Aorta (tissue), 5 donors: ENCODE measurements at regions of chr2 and their contacts with region 1.

Region 1: DNA sequence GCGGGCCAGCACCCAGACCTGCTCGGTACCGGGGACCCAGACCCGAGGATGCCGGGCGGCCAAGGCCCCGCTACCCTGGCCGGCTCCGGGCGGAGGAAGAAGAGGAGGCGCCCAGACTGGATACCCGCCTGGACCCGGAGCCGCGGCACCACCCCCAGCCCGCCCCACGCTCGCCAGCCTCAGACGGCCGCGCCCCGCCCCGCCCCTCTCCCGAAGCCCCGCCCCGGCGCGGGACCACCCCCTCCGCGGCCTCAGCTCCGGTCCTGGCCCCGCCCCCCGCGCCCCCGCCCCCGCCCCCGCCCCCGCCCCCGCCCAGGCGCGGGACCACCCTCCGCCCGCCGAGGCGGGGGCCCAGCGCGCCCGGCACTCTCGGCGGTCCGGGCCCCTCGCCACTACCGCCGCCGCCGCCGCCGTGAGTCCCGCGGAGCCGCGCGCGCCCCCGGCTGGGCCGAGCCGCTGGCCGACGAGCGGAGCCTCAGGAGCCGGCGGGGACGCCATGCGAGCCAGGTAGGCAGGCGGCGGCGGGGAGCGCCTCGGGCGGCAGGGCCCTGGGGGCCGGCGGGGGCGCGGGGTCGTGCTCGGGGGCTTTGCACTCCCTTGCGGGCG is at the start of gene SH3BP4:
- DNase-seq: peak; percentile 87 to 94
- ATAC-seq: peak; percentile 91
- H3K4me3 ChIP-seq: peak within 1 kb of the TSS; percentile 91 to 93
- H3K27ac ChIP-seq: peak within 1 kb of the TSS; percentile 59 to 64
- H3K4me1 ChIP-seq: no peaks in the 10 kb centered on the region
- H3K27me3 ChIP-seq: no peaks in the 10 kb centered on the region
- total RNA-seq, gene SH3BP4: 27.6 to 32.2 TPM

Region 2: DNA sequence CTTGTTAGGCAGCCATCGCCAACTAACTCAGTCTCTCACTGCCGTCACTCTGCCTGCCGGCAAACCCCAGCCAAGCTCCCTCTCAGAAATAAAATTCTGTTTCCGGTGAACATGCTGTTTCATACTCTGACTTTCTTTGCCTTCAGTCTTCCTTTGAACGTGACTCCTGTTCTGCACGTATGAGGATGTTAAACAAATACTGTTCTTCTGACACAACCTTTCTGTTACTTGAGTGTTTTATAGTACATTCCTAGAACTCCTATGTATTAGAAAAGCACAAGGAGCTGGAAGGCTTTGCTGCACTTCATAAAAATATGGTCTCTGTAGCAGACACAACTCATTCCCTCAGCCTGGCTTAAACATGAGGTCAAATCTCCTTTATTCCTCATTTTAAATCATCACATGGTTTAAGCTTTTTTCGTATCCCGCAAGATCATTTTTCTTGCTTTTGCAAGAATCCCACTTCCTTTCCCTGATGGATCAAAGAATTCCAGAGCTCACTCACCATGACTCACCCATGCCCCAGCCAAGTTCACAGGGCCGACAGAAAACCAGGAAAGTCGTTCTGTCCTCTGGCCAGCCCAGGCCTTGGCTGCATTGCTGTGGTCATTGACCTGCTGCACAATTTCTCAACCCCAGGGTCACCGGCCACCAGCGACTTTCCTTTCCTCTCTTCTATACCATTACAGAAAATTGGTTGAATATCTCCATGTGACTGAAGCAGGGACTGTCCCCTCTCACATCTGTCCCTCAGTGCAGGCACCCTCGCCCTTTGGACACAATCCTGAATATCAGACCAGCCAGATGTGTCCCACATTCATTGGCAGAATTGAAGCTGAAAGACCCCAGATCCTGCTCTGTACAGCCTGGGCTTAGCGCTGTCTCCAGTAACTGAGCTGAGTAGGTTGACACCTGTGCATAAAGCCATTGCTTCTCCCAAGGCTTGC is 271.8 kb before region 1 on chr2:
- intact Hi-C with region 1: loop called in 1 of 2 experiments (anchors 5 kb)
- DNase-seq: peak; percentile 88 to 89
- ATAC-seq: peak; percentile 91
- H3K4me3 ChIP-seq: peak overlapping the region in 1 of 2 donors; percentile 14
- H3K27ac ChIP-seq: peak overlapping the region in 1 of 2 donors; percentile 67
- H3K4me1 ChIP-seq: peaks cover 3 to 4% of the 10 kb centered on the region in 2 donors
- H3K27me3 ChIP-seq: no peaks in the 10 kb centered on the region

Region 3: GRCh38 chr2:234823877-234824376 is 127.8 kb before region 1 on chr2:
- intact Hi-C with region 1: loop called in 1 of 2 experiments (anchors 10 kb)
- DNase-seq: peak in 1 of 2 donors; percentile 74
- ATAC-seq: peak; percentile 88
- H3K4me3 ChIP-seq: no peak overlapping the region
- H3K27ac ChIP-seq: peak overlapping the region in 1 of 2 donors; percentile 47
- H3K4me1 ChIP-seq: no peaks in the 10 kb centered on the region
- H3K27me3 ChIP-seq: no peaks in the 10 kb centered on the region

Region 4: DNA sequence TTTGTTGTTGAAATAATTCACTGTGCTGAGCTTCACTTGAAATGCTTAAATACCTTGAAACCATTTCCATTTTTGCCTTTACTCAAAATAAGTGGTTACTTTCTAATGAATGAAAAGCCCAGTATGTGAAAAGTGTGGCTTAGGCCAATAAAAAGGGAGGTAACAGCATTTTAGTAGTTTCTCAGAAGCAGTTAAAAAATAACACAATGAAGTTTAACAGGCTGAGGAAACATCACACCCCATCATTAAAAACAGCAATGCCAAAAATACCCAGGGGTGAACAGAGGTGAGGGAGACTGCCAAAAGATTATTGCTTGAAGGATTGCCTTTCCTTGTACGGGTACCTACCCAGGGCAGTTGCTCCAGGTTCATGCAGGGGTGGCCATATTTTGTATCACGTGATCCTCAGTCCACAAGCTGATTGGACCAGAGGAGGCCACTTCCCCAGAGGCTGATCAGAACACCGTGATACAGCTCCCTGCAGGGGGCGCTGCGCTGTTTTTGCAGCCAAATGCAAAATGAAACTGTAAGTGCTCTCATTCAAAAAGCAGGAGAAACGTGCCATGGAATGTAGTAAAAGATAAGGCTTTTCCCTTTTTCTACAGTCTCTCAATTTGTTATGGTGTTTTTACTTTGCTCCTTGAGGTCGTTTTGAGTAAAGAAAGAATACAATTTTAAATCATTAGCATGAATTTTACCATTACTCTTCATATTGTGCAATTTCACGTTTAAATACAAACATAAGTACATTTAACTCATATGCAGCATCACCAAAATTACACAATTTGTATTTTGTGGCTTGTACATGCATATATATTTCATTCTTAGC is 70.1 kb before region 1 on chr2:
- intact Hi-C with region 1: loop called in 1 of 2 experiments (anchors 10 kb)
- DNase-seq: peak; percentile 89 to 94
- ATAC-seq: peak; percentile 94
- H3K4me3 ChIP-seq: peak overlapping the region in 1 of 2 donors; percentile 12
- H3K27ac ChIP-seq: peak overlapping the region in 1 of 2 donors; percentile 58
- H3K4me1 ChIP-seq: no peaks in the 10 kb centered on the region
- H3K27me3 ChIP-seq: no peaks in the 10 kb centered on the region

Region 5: GRCh38 chr2:234989183-234989701 is 37.5 kb after region 1 on chr2:
- intact Hi-C with region 1: loop called (anchors 5 kb)
- DNase-seq: peak; percentile 95 to 97
- ATAC-seq: peak; percentile 82
- H3K4me3 ChIP-seq: no peak overlapping the region
- H3K27ac ChIP-seq: peak overlapping the region in 1 of 2 donors; percentile 57
- H3K4me1 ChIP-seq: no peaks in the 10 kb centered on the region
- H3K27me3 ChIP-seq: no peaks in the 10 kb centered on the region

Region 6: GRCh38 chr2:234994438-234995321 is 42.9 kb after region 1 on chr2:
- intact Hi-C with region 1: loop called (anchors 5 kb)
- DNase-seq: peak in 1 of 2 donors; percentile 57
- ATAC-seq: no peak
- H3K4me3 ChIP-seq: no peak overlapping the region
- H3K27ac ChIP-seq: no peak overlapping the region
- H3K4me1 ChIP-seq: no peaks in the 10 kb centered on the region
- H3K27me3 ChIP-seq: no peaks in the 10 kb centered on the region

Region 7: GRCh38 chr2:235050992-235051351 is 99.2 kb after region 1 on chr2:
- intact Hi-C with region 1: loop called in 1 of 2 experiments (anchors 5 kb)
- DNase-seq: peak; percentile 92 to 97
- ATAC-seq: peak; percentile 90
- H3K4me3 ChIP-seq: no peak overlapping the region
- H3K27ac ChIP-seq: peak overlapping the region in 1 of 2 donors; percentile 54
- H3K4me1 ChIP-seq: no peaks in the 10 kb centered on the region
- H3K27me3 ChIP-seq: no peaks in the 10 kb centered on the region

Region 8: GRCh38 chr2:235063471-235063961 is 111.7 kb after region 1 on chr2:
- intact Hi-C with region 1: no loop called
- DNase-seq: no peak
- ATAC-seq: peak; percentile 37
- H3K4me3 ChIP-seq: no peak overlapping the region
- H3K27ac ChIP-seq: peak overlapping the region in 1 of 2 donors; percentile 13
- H3K4me1 ChIP-seq: no peaks in the 10 kb centered on the region
- H3K27me3 ChIP-seq: no peaks in the 10 kb centered on the region

Region 9: DNA sequence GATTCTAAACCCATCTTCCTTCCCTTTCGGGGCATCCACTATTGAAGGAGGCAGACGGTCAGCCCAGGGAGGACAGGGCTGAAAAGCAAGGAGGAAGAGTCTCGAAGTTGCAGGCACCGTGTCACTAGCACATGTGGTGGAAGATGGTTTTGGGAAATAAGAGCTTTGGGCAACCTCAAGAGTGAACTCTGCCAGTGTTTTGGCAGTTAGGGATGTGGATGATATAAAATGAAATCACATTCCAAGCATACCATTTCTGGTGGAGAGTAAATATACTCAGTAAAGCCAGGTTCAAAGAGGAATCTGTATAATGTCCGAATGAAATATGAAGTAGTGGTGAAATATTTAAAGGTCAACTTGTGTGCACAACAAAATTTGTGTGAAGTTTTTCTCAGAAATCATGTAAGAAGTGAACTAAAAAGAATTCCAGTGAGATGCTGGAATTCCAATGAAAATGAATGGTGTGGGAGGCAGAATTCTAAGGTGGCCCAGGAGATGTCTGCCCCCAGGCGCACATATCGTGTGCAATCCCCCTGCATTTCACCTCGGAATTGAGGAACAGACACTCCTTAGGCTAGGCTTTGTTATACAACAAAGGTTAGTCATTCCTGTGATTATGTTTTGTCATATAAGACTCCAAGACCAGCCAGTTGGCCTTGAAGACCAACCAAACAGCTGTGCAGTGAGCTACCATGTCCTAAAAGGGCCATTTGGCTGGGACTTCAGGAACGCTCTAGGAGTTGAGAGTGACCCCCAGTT is 147.1 kb after region 1 on chr2:
- intact Hi-C with region 1: no loop called
- DNase-seq: no peak
- ATAC-seq: no peak
- H3K4me3 ChIP-seq: no peak overlapping the region
- H3K27ac ChIP-seq: no peak overlapping the region
- H3K4me1 ChIP-seq: no peaks in the 10 kb centered on the region
- H3K27me3 ChIP-seq: no peaks in the 10 kb centered on the region

Region 10: GRCh38 chr2:235594041-235594440 is 642.3 kb after region 1 on chr2:
- intact Hi-C with region 1: no loop called
- DNase-seq: no peak
- ATAC-seq: peak; percentile 72
- H3K4me3 ChIP-seq: no peak overlapping the region
- H3K27ac ChIP-seq: no peak overlapping the region
- H3K4me1 ChIP-seq: no peaks in the 10 kb centered on the region
- H3K27me3 ChIP-seq: no peaks in the 10 kb centered on the region